KBM-7 (cell line): ENCODE measurements at regions of chrX and their contacts with region 1.

Region 1: DNA sequence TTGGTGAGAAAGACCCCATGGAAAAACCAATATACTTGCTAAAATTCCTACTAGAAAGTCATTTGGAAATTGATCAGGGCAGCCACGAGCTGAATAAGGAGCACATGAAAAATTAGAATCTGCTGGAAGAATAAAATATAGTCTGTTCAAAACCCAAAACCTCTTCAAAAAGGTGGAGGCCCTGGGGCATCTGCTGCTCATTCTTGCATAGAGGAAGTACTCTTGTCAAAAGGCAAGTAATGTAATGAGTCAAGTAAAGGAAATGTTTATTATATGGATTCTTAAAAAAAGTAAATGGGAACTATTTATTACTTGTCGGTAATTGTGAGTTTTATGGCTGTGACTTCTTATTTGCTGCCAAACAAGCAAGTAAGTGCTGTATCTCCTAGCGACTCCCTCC is 109.5 kb downstream of the GK start:
- DNase-seq: no peak

Region 2: DNA sequence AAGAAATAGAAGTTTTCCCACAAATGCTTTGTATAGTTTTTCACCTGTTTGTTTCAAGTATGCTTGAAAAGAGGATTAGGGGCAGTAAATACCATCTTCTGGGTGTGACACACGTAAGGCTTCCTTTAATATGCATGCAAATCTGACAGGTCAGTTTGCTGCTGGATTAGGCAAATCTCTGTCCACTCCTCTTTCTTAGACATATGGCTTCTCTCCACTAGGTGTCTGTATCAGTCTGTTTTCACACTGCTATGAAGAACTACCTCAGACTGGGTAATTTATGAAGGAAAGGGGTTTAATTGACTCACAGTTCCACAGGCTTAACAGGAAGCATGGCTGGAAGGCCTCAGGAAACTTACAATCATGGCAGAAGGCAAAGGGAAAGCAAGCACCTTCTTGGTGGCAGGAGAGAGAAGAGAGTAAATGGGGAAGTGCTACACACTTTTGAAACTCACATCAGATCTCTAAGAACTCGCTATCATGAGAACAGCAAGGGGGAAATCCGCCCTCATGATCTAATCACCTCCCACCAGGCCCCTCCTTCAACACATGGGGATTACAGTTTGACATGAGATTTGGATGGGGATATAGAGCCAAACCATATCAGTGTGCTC is 59.4 kb after region 1 on chrX:
- in situ Hi-C with region 1: loop called (anchors 10 kb)
- DNase-seq: peak; percentile 72

Region 3: DNA sequence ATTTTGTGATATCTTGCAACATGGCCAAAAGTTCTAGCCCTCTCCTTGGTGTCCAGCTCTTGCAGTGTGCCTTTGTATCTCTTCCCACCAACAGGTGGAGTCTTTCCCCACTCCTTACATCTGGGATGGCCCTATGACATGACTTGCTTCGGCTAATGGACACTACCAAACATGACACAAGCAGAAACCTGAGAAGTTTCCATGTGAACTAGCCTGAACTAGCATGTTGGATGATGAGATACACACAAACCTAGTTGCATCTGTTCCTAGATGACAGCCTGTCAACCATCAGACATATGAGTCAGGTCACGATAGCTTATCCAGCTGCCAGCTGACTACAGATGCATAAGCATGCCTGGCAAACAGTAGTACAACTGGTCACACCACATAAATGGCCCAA is 516.6 kb after region 1 on chrX:
- in situ Hi-C with region 1: no loop called
- DNase-seq: peak; percentile 21